Naive thymus-derived CD4-positive, alpha-beta T cell (primary cell): ENCODE measurements at regions of chr9 and their contacts with region 1.

Region 1: GRCh38 chr9:92877531-92878430 is at the start of gene ZNF484:
- DNase-seq: peak; percentile 86 to 97 (median 94)
- ATAC-seq: peak; percentile 99
- H3K4me3 ChIP-seq: peak within 1 kb of the TSS; percentile 77
- H3K4me3 Mint-ChIP-seq: peak within 1 kb of the TSS; percentile 91 to 100 (median 99)
- H3K27ac ChIP-seq: peak within 1 kb of the TSS; percentile 90
- H3K27ac Mint-ChIP-seq: peak within 1 kb of the TSS; percentile 94 to 100 (median 99)
- H3K4me1 ChIP-seq: peaks cover 0 to 15% of the 10 kb centered on the region in 2 donors
- H3K4me1 Mint-ChIP-seq: peaks cover 28 to 69% (median 58%) of the 10 kb centered on the region in 7 donors
- H3K27me3 ChIP-seq: no peaks in the 10 kb centered on the region
- H3K27me3 Mint-ChIP-seq: no peaks in the 10 kb centered on the region
- total RNA-seq, gene ZNF484: 12.4 to 25.4 (median 14.0) TPM

Region 2: DNA sequence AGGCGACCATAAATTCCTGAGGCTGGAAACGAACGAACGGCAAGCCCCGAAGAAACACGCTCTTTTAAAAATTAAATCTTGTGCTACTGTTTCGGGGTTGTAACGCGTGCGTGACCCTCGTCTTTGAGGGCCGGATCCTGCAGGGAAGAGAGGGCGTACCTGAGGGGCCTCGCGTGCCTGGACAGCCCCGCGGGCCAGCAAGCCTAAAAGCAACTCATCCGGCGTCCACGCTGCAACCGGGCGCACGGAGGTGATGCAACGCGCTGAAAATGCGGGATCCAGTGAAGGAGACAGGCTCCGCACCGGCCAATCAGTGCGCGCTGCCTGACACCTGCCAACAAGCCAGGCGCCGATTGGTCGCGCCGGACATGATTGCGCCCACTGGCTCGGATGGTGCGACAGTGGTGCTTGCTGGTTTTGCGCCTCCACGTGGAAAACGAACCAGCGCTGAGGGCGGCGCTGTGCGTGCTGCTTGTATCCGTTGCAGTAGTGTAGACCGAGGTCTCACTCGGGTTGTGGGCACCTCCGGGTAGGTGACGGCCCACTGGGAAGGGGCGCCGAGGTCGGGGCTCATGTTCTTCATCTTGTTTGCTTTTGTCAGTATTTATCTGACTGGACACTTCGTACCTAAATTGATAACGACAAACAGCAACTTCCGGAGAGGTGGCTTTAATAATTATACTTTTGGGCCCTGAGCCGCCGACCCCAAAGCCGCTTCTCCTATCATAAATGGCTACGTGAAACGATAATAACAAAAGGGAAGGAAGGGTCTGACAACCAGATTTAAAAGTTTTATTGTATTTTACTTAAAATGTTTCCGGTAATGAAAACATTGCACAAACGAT is 584.1 kb before region 1 on chr9 and contains the start of gene IARS1:
- CTCF ChIA-PET with region 1: no interaction called
- POLR2A ChIA-PET with region 1: no interaction called
- intact Hi-C with region 1: loop called in 1 of 2 experiments (anchors 10 kb)
- DNase-seq: peak; percentile 97 to 100 (median 100)
- ATAC-seq: peak; percentile 98
- H3K4me3 ChIP-seq: peak within 1 kb of the TSS; percentile 61
- H3K4me3 Mint-ChIP-seq: peak within 1 kb of the TSS; percentile 85 to 99 (median 98)
- H3K27ac ChIP-seq: peak within 1 kb of the TSS; percentile 78
- H3K27ac Mint-ChIP-seq: peak within 1 kb of the TSS; percentile 95 to 100 (median 98)
- H3K4me1 ChIP-seq: peaks cover 17 to 33% of the 10 kb centered on the region in 2 donors
- H3K4me1 Mint-ChIP-seq: peaks cover 23 to 68% (median 62%) of the 10 kb centered on the region in 7 donors
- H3K27me3 ChIP-seq: no peaks in the 10 kb centered on the region
- H3K27me3 Mint-ChIP-seq: no peaks in the 10 kb centered on the region
- total RNA-seq, gene IARS1: 52.4 to 145 (median 97.7) TPM

Region 3: DNA sequence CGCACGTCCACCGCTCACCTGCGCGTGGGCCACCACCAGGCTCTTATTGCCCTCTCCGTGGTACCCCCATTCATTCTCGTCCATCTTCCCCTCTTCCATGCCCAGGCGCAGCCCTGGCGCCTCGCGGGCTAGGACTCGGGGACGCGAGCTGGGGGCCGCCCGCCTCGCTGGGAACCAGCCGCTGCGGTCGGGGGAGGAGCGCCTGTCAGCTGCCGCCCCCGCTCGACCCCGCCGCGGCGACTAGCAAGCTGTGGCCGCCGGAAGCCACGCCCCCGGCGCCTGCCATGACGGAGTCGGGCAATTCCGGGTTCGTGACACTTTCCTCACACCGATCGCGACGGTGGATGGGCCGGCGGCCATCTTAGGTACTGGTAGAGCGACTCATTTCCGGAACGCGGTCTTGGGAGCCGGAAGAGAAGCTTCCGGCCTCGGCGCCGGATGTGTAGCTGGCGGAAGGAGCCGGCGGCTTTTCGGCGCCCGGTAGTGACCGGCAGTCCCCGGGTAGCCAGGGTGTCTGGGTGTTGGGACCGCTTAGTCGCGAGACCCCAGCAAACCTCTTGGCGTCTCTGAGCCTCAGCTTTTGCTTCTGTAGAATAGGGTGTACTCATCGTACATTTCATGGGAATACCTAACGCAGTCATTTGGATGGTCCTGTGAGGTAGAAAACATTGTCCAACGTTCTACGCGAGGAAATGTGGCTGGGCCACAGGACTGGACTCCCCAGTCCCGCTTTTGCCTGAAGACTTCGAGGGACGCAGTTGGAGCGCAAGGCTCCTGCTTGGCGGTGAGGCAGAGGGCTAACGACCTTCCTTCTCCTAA is 207.7 kb before region 1 on chr9 and contains the start of gene IPPK:
- CTCF ChIA-PET with region 1: no interaction called
- POLR2A ChIA-PET with region 1: no interaction called
- intact Hi-C with region 1: loop called (anchors 1 kb)
- DNase-seq: peak; percentile 92 to 99 (median 96)
- ATAC-seq: peak; percentile 98
- H3K4me3 ChIP-seq: peak within 1 kb of the TSS; percentile 100
- H3K4me3 Mint-ChIP-seq: peak within 1 kb of the TSS; percentile 83 to 98 (median 95)
- H3K27ac ChIP-seq: peak within 1 kb of the TSS; percentile 91
- H3K27ac Mint-ChIP-seq: peak within 1 kb of the TSS; percentile 90 to 98 (median 95)
- H3K4me1 ChIP-seq: peaks cover 16 to 23% of the 10 kb centered on the region in 2 donors
- H3K4me1 Mint-ChIP-seq: peaks cover 27 to 46% (median 36%) of the 10 kb centered on the region in 7 donors
- H3K27me3 ChIP-seq: no peaks in the 10 kb centered on the region
- H3K27me3 Mint-ChIP-seq: no peaks in the 10 kb centered on the region
- total RNA-seq, gene IPPK: 5.9 to 12.8 (median 7.4) TPM

Region 4: GRCh38 chr9:92808726-92809451 is 68.9 kb before region 1 on chr9:
- CTCF ChIA-PET with region 1: interaction called, 5 read pairs
- POLR2A ChIA-PET with region 1: no interaction called
- intact Hi-C with region 1: loop called in 1 of 2 experiments (anchors 5 kb)
- DNase-seq: peak; percentile 16 to 72 (median 44)
- ATAC-seq: peak; percentile 66
- H3K4me3 ChIP-seq: peak overlapping the region; percentile 57
- H3K4me3 Mint-ChIP-seq: peak overlapping the region; percentile 71 to 89 (median 86)
- H3K27ac ChIP-seq: no peak overlapping the region
- H3K27ac Mint-ChIP-seq: peak overlapping the region in 2 of 9 donors; percentile 36 to 58
- H3K4me1 ChIP-seq: peaks cover 6% of the 10 kb centered on the region in 2 donors
- H3K4me1 Mint-ChIP-seq: peaks cover 7 to 28% (median 10%) of the 10 kb centered on the region in 7 donors
- H3K27me3 ChIP-seq: peaks cover 23 to 36% of the 10 kb centered on the region in 2 donors
- H3K27me3 Mint-ChIP-seq: peaks cover 54 to 64% (median 60%) of the 10 kb centered on the region in 5 donors

Region 5: GRCh38 chr9:92860867-92861266 is 16.9 kb before region 1 on chr9:
- CTCF ChIA-PET with region 1: no interaction called
- POLR2A ChIA-PET with region 1: no interaction called
- intact Hi-C with region 1: loop called in 1 of 2 experiments (anchors 2 kb)
- DNase-seq: no peak
- ATAC-seq: no peak
- H3K4me3 ChIP-seq: no peak overlapping the region
- H3K4me3 Mint-ChIP-seq: no peak overlapping the region
- H3K27ac ChIP-seq: no peak overlapping the region
- H3K27ac Mint-ChIP-seq: peak overlapping the region in 4 of 9 donors; percentile 26 to 84 (median 58)
- H3K4me1 ChIP-seq: no peaks in the 10 kb centered on the region
- H3K4me1 Mint-ChIP-seq: peaks cover 10 to 78% (median 62%) of the 10 kb centered on the region in 7 donors
- H3K27me3 ChIP-seq: no peaks in the 10 kb centered on the region
- H3K27me3 Mint-ChIP-seq: no peaks in the 10 kb centered on the region

Region 6: DNA sequence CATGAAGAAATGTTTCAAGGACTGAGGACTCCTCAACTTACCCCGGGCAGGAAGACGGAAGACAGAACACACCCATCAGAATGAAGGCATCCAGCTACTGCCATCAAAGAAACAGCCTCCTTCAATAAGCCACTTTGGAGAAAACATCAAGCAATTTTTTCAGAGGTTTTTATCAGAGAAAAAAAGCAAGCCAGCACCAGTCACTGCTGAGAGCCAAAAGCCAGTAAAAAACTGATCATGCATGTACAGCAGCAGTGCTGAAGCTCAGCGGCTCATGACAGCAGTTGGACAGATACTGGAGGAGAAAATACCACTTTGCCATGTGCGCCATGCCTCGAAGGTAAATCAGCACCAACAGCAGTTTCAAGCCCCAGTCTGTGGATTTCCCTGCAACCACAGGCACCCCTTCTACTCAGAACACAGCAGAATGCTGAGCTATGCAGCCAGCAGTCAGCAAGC is 10.1 kb after region 1 on chr9:
- CTCF ChIA-PET with region 1: no interaction called
- POLR2A ChIA-PET with region 1: interaction called, 4 read pairs
- intact Hi-C with region 1: loop called in 1 of 2 experiments (anchors 1 kb)
- DNase-seq: peak in 7 of 9 donors; percentile 60 to 79 (median 67)
- ATAC-seq: peak; percentile 74
- H3K4me3 ChIP-seq: peak overlapping the region; percentile 29
- H3K4me3 Mint-ChIP-seq: peak overlapping the region; percentile 4 to 92 (median 77)
- H3K27ac ChIP-seq: peak overlapping the region; percentile 57
- H3K27ac Mint-ChIP-seq: peak overlapping the region; percentile 23 to 97 (median 92)
- H3K4me1 ChIP-seq: peaks cover 18 to 35% of the 10 kb centered on the region in 2 donors
- H3K4me1 Mint-ChIP-seq: peaks cover 21 to 86% (median 78%) of the 10 kb centered on the region in 7 donors
- H3K27me3 ChIP-seq: no peaks in the 10 kb centered on the region
- H3K27me3 Mint-ChIP-seq: peaks cover 0 to 6% (median 0%) of the 10 kb centered on the region in 5 donors

Region 7: GRCh38 chr9:92986176-92987085 is 108.7 kb after region 1 on chr9:
- CTCF ChIA-PET with region 1: no interaction called
- POLR2A ChIA-PET with region 1: no interaction called
- intact Hi-C with region 1: loop called in 1 of 2 experiments (anchors 1 kb)
- DNase-seq: peak in 7 of 9 donors; percentile 52 to 66 (median 57)
- ATAC-seq: peak; percentile 75
- H3K4me3 ChIP-seq: no peak overlapping the region
- H3K4me3 Mint-ChIP-seq: peak overlapping the region; percentile 34 to 71 (median 62)
- H3K27ac ChIP-seq: peak overlapping the region; percentile 59
- H3K27ac Mint-ChIP-seq: peak overlapping the region; percentile 56 to 95 (median 86)
- H3K4me1 ChIP-seq: peaks cover 65 to 71% of the 10 kb centered on the region in 2 donors
- H3K4me1 Mint-ChIP-seq: peaks cover 66 to 93% (median 89%) of the 10 kb centered on the region in 7 donors
- H3K27me3 ChIP-seq: no peaks in the 10 kb centered on the region
- H3K27me3 Mint-ChIP-seq: no peaks in the 10 kb centered on the region